HepG2 (cell line): ENCODE measurements at regions of chr1 and their contacts with region 1.

Region 1: GRCh38 chr1:205700865-205701401 is 20.6 kb upstream of the SLC45A3 start:
- DNase-seq: no peak
- ATAC-seq: peak; percentile 16; the same call in 1 of the 3 replicates
- H3K4me3 ChIP-seq: no peak overlapping the region
- H3K27ac ChIP-seq: no peak overlapping the region
- H3K4me1 ChIP-seq: peaks cover 62% of the 10 kb centered on the region
- H3K27me3 ChIP-seq: no peaks in the 10 kb centered on the region
- CTCF ChIP-seq: no peak
- EP300 ChIP-seq: no peak
- POLR2A ChIP-seq: no peak
- RAD21 ChIP-seq: no peak

Region 2: DNA sequence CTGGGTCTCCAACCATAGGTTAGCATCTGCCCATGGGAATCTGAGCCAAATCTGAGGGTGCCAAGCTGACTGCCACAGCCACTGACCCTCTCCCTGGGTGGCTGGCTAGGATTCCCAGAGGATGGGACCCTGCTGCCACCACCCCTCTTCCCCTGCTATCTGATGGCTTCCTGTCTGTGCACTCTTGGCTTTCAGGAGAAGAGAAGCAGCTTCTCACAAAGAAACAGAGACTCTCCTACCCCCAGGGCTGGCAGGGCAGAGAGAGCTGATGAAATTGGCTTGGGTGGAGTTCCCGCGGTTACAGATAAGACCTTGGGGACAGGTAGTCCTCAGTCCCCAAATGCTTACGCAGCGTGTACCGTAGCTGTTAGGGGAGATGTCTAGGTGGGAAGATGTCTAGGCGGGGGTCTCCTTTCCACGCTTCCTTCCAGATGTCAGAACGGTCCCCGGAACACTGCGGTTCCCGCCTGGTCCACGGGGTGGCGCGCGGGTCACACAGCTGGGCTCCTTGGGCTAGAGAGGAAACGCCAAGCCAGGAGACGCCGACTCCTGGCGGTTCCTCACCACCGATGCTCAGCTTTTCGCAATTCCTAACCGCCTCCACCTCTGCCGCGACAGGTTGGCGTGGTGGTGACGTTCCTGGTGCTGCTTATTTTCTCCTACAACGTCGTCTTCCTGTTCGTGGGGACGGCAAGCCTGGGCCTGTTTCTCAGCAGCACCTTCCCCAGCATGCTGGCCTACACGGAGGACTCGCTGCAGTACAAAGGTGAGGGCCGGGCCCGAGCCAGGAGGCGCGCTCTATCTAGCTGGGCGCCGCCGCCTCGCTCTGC is 109.2 kb before region 1 on chr1:
- CTCF ChIA-PET with region 1: no interaction called
- POLR2A ChIA-PET with region 1: no interaction called
- in situ Hi-C with region 1: no loop called
- intact Hi-C with region 1: loop called (anchors 1 kb)
- DNase-seq: peak; percentile 73
- ATAC-seq: peak; percentile 86
- H3K4me3 ChIP-seq: peak overlapping the region; percentile 59 to 85 (median 68); a peak in 5 of 6 replicates
- H3K27ac ChIP-seq: peak overlapping the region; percentile 57
- H3K4me1 ChIP-seq: peaks cover 36% of the 10 kb centered on the region
- H3K27me3 ChIP-seq: 0 out of 5 replicates have a peak, but pooled peaks cover 0 to 7% of the 10 kb centered on the region in 2 experiments
- CTCF ChIP-seq: peak; percentile 100
- EP300 ChIP-seq: no peak
- POLR2A ChIP-seq: peak in 1 of 2 experiments; percentile 39; a peak in 1 of 4 replicates
- RAD21 ChIP-seq: peak; percentile 99

Region 3: DNA sequence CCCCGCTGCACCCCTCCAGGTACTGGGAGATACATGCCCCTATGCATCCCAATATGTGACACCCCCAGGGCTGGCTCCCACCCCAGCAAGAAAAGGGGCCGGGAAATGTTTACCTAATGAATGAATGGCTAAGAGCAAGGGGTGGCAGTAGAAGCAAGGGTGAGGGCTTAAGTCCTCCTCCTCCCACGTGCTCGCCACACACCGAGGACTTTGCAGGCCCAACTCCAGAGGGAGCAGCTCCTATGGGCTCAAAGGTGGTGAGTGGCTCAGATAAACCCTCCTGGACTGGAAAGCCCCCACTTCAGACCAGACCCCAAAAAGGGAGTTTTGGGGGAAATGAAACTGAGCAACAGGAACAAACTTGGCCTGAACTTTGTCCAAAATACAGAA is 32.0 kb before region 1 on chr1:
- CTCF ChIA-PET with region 1: no interaction called
- POLR2A ChIA-PET with region 1: no interaction called
- in situ Hi-C with region 1: loop called (anchors 5 kb)
- intact Hi-C with region 1: no loop called
- DNase-seq: peak; percentile 25
- ATAC-seq: peak; percentile 62
- H3K4me3 ChIP-seq: no peak overlapping the region
- H3K27ac ChIP-seq: no peak overlapping the region
- H3K4me1 ChIP-seq: peaks cover 99% of the 10 kb centered on the region
- H3K27me3 ChIP-seq: no peaks in the 10 kb centered on the region
- CTCF ChIP-seq: peak; percentile 66
- EP300 ChIP-seq: no peak
- POLR2A ChIP-seq: no peak
- RAD21 ChIP-seq: peak; percentile 43; the same call in 1 of the 2 replicates

Region 4: GRCh38 chr1:205750138-205751035 is 49.5 kb after region 1 on chr1 and contains the start of gene NUCKS1:
- CTCF ChIA-PET with region 1: no interaction called
- POLR2A ChIA-PET with region 1: no interaction called
- in situ Hi-C with region 1: no loop called
- intact Hi-C with region 1: no loop called
- DNase-seq: peak; percentile 99
- ATAC-seq: peak; percentile 88
- H3K4me3 ChIP-seq: peak within 1 kb of the TSS; percentile 65 to 81 (median 75)
- H3K27ac ChIP-seq: peak within 1 kb of the TSS; percentile 92
- H3K4me1 ChIP-seq: peaks cover 75% of the 10 kb centered on the region
- H3K27me3 ChIP-seq: no peaks in the 10 kb centered on the region; a peak in 1 of 5 replicates
- CTCF ChIP-seq: no peak
- EP300 ChIP-seq: peak in 1 of 2 experiments; percentile 56; a peak in 2 of 4 replicates
- POLR2A ChIP-seq: no peak; a peak in 1 of 4 replicates
- RAD21 ChIP-seq: no peak
- total RNA-seq, gene NUCKS1: 117 and 194 TPM in 2 replicates